Heart right ventricle (tissue), 16 donors: ENCODE measurements at regions of chr2 and their contacts with region 1.

Region 1: GRCh38 chr2:171522052-171522787 is at the start of gene CYBRD1:
- DNase-seq: peak; percentile 87 to 88
- ATAC-seq: peak; percentile 82 to 91 (median 86)
- H3K4me3 ChIP-seq: peak within 1 kb of the TSS; percentile 66 to 93 (median 82)
- H3K27ac ChIP-seq: peak within 1 kb of the TSS; percentile 76 to 97 (median 88)
- H3K4me1 ChIP-seq: peaks cover 5 to 42% (median 31%) of the 10 kb centered on the region in 9 donors
- H3K27me3 ChIP-seq: no peaks in the 10 kb centered on the region
- CTCF ChIP-seq: peak in 1 of 9 donors; percentile 14
- total RNA-seq, gene CYBRD1: 26.1 to 67.5 (median 44.5) TPM

Region 2: DNA sequence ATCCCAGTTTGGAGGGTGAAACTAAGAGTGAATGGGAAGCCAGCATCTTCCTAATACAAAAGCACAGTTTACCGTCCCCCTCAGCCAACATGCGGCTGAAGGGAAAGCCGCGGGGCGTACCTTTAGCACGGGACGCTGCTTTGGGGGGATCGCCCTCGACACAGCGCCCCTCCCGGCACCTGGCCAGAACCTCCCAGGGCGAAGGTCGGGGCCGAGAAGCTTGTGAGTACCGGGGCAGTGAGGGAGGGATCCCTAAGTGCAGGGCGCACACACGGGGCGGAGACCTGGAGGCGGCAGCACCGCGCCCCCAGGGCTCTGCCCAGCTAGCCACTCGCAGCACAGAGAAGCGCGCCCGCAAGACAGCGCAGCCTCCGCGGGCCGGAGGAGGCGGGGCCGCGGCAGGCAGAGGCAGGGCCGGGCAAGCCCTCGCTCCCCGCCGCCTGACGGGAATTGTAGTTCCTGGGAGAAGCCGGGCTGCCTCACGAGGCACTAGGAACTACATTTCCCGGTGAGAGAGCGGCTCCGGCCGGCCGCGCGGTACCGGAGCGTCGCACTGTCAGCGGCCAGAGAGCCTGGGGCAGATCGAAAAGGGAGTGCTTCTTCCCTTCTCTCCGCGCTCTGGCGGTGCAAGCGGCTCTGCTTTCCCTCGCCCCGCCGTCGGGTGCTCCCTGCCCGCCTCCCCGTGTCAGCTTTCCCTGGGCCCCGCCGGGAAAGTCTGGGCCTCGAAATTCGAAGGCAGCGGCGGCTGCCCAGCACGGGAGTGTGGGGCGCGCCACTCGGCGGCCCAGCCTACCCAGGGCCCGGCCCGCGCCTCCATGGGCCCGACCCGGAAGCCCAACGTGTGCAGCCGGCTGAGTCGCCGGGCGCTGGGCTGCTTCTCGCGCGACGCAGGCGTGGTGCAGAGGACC is 88.2 kb before region 1 on chr2 and contains the starts of genes DCAF17 and METTL8:
- intact Hi-C with region 1: loop called in 5 of 10 experiments (anchors 2 to 10 kb)
- DNase-seq: peak; percentile 94 to 96
- ATAC-seq: peak; percentile 98 to 99 (median 99)
- H3K4me3 ChIP-seq: peak within 1 kb of the TSS; percentile 45 to 95 (median 82)
- H3K27ac ChIP-seq: peak within 1 kb of the TSS; percentile 71 to 98 (median 96)
- H3K4me1 ChIP-seq: peaks cover 0 to 21% (median 17%) of the 10 kb centered on the region in 9 donors
- H3K27me3 ChIP-seq: no peaks in the 10 kb centered on the region
- CTCF ChIP-seq: peak in 8 of 9 donors; percentile 19 to 62 (median 42)
- total RNA-seq, gene DCAF17: 6.3 to 10.5 (median 7.8) TPM
- total RNA-seq, gene METTL8: 6.6 to 13.6 (median 11.7) TPM